CD4-positive, alpha-beta T cell (primary cell): ENCODE measurements at regions of chr4 and their contacts with region 1.

Region 1: DNA sequence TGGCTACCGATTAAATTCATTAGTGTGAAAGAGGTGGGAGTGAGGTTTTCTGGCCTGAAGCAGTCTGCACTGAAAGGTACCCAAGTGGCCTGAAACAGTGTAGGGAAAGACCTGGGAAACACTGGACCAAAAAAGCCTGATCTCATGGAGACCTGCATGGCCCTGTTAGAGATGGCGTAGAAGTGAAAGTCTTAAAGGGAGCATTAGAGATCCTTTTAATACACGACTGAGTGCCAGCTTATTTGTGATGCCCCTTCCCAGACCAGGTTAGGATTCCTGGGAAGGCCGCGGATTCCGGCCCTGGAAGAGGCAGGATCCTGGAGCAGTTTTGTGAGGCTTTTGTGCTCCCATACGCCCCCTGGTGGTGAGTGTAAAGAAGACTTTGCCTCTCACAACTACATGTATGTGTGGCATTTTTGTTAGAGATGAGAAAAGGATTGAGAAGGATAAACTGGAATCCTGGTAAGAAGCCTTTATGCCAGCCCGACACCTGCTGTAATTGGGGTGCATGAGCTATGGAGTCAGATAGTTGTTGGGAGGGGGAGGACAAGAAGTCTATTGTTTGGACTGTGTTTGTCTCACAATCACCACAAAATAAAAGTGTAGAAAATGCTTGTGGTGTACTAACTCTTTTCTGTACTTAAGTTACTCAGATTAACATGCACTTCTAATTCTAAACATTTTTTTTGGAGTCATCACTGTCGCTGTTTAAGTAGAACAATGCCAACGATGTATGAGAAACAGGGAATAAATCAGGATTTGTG is 54.0 kb downstream of the JADE1 start:
- DNase-seq: peak; percentile 39 to 84 (median 61)
- ATAC-seq: peak; percentile 35
- H3K4me3 ChIP-seq: no peak overlapping the region
- H3K4me3 Mint-ChIP-seq: no peak overlapping the region
- H3K27ac ChIP-seq: peak overlapping the region; percentile 18 to 26
- H3K27ac Mint-ChIP-seq: peak overlapping the region; percentile 70
- H3K4me1 ChIP-seq: peaks cover 27% of the 10 kb centered on the region
- H3K4me1 Mint-ChIP-seq: peaks cover 55% of the 10 kb centered on the region
- H3K27me3 ChIP-seq: no peaks in the 10 kb centered on the region
- H3K27me3 Mint-ChIP-seq: no peaks in the 10 kb centered on the region
- CTCF ChIP-seq: peak; percentile 98

Region 2: DNA sequence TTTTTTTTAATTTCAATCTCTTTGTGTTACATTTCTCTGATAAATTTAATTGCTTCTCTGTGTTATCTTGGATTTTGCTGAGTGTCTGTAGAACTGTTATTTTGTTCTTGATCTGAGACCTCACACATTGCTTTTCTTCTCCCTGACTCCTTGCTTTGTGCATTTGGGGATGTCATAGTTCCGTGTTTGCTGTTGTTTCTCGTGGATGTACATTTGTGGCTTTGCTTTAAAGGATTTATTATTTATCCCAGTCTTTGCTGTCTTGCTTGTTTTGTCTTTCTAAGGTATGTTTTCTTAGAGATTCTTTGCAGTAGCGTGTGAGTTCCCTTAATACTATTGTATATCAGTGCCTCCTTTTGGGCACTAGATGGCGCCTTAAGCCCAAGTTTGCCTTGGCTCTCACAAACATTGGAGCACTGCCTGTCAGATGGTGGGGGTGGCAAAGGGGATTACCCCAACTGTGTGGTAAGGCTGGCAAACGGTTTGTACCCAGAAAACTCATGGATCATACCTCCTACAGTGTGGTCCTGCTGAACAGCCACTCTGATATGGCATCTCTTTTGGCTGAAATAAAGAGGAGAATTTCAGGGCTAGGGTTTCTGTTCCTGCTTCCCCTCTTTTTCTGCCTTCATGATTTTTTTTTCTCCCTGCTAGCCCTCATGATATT is 672.2 kb before region 1 on chr4:
- CTCF ChIA-PET with region 1: interaction called, 3 read pairs
- POLR2A ChIA-PET with region 1: no interaction called
- intact Hi-C with region 1: loop called (anchors 1 kb)
- DNase-seq: peak; percentile 48 to 86 (median 58)
- ATAC-seq: peak; percentile 100
- H3K4me3 ChIP-seq: no peak overlapping the region
- H3K4me3 Mint-ChIP-seq: no peak overlapping the region
- H3K27ac ChIP-seq: no peak overlapping the region
- H3K27ac Mint-ChIP-seq: no peak overlapping the region
- H3K4me1 ChIP-seq: no peaks in the 10 kb centered on the region
- H3K4me1 Mint-ChIP-seq: no peaks in the 10 kb centered on the region
- H3K27me3 ChIP-seq: no peaks in the 10 kb centered on the region
- H3K27me3 Mint-ChIP-seq: no peaks in the 10 kb centered on the region
- CTCF ChIP-seq: peak; percentile 96

Region 3: DNA sequence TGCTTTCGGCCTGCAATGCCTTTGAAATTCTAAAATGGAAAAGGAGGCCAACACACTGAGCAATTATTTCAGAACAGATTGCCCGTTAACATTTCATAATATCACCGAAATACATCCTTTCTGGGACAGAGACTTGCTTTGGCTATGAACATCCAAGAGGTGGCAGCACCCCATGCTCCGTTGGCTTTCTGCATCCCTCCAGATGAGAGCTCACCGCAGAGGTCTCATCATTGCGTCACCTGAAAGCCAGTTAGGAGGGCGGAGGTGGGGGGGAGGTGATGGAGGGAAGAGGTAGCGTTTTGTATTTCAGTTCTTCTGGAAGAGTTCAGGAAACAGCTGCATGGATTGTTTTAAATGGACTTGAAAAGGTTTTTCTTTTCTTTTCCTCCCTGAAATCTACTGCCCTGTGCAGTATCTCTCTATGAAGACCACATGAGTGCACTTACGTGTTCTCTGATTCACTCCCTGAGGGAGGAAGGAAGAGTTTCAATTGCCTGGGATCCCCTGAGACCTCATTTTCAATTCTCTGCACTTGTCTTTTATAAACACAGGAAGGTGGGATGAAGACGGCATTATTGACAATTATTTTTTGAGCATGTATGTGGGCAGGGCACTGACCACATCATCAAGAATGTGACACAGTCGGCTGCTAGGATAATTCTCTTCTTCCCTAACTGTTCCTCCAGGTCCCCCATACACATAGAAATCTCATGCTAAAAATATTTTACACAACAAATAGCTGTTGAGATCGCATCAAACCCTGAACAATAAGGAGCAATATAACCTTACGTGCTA is 409.0 kb before region 1 on chr4:
- CTCF ChIA-PET with region 1: no interaction called
- POLR2A ChIA-PET with region 1: no interaction called
- intact Hi-C with region 1: loop called (anchors 1 to 2 kb)
- DNase-seq: peak; percentile 26 to 76 (median 46)
- ATAC-seq: peak; percentile 99
- H3K4me3 ChIP-seq: no peak overlapping the region
- H3K4me3 Mint-ChIP-seq: no peak overlapping the region
- H3K27ac ChIP-seq: no peak overlapping the region
- H3K27ac Mint-ChIP-seq: no peak overlapping the region
- H3K4me1 ChIP-seq: peaks cover 3% of the 10 kb centered on the region
- H3K4me1 Mint-ChIP-seq: no peaks in the 10 kb centered on the region
- H3K27me3 ChIP-seq: no peaks in the 10 kb centered on the region
- H3K27me3 Mint-ChIP-seq: peaks cover 9% of the 10 kb centered on the region
- CTCF ChIP-seq: peak; percentile 65

Region 4: DNA sequence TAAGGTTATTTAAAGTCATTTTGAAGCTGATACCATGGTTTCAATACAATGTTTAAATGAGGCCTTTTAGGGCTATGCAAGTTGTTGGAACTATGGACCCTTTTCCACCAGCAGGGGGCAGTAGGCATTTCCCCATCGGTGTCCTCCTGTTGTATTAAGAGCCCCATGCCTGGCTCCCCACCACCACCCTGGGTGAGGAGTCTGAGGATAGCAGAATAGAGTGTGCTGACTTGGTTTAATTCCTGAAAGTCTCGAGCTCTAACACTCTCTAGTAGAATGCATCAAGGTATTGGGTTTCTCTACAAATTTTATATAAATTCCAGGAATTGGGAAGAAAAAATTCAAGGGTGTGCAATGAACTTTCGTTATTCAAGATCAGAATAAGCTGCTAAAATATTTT is 288.8 kb before region 1 on chr4:
- CTCF ChIA-PET with region 1: no interaction called
- POLR2A ChIA-PET with region 1: no interaction called
- intact Hi-C with region 1: loop called (anchors 5 to 10 kb)
- DNase-seq: peak; percentile 25 to 74 (median 50)
- ATAC-seq: peak; percentile 56
- H3K4me3 ChIP-seq: no peak overlapping the region
- H3K4me3 Mint-ChIP-seq: no peak overlapping the region
- H3K27ac ChIP-seq: no peak overlapping the region
- H3K27ac Mint-ChIP-seq: no peak overlapping the region
- H3K4me1 ChIP-seq: no peaks in the 10 kb centered on the region
- H3K4me1 Mint-ChIP-seq: no peaks in the 10 kb centered on the region
- H3K27me3 ChIP-seq: peaks cover 0 to 3% of the 10 kb centered on the region in 2 experiments
- H3K27me3 Mint-ChIP-seq: peaks cover 16% of the 10 kb centered on the region
- CTCF ChIP-seq: peak; percentile 51

Region 5: GRCh38 chr4:128782076-128782715 is 81.3 kb before region 1 on chr4:
- CTCF ChIA-PET with region 1: interaction called, 4 read pairs
- POLR2A ChIA-PET with region 1: no interaction called
- intact Hi-C with region 1: loop called (anchors 1 kb)
- DNase-seq: peak; percentile 38 to 80 (median 60)
- ATAC-seq: peak; percentile 77
- H3K4me3 ChIP-seq: no peak overlapping the region
- H3K4me3 Mint-ChIP-seq: no peak overlapping the region
- H3K27ac ChIP-seq: no peak overlapping the region
- H3K27ac Mint-ChIP-seq: no peak overlapping the region
- H3K4me1 ChIP-seq: no peaks in the 10 kb centered on the region
- H3K4me1 Mint-ChIP-seq: no peaks in the 10 kb centered on the region
- H3K27me3 ChIP-seq: no peaks in the 10 kb centered on the region
- H3K27me3 Mint-ChIP-seq: no peaks in the 10 kb centered on the region
- CTCF ChIP-seq: peak; percentile 73